Right lobe of liver (tissue), 6 donors: ENCODE measurements at regions of chr16 and their contacts with region 1.

Region 1: GRCh38 chr16:63038397-63039106 is 1002.3 kb upstream of the CDH8 start:
- DNase-seq: no peak
- ATAC-seq: no peak
- H3K4me3 ChIP-seq: no peak overlapping the region
- H3K27ac ChIP-seq: no peak overlapping the region
- H3K4me1 ChIP-seq: no peaks in the 10 kb centered on the region
- H3K27me3 ChIP-seq: no peaks in the 10 kb centered on the region
- CTCF ChIP-seq: no peak
- POLR2A ChIP-seq: no peak

Region 2: DNA sequence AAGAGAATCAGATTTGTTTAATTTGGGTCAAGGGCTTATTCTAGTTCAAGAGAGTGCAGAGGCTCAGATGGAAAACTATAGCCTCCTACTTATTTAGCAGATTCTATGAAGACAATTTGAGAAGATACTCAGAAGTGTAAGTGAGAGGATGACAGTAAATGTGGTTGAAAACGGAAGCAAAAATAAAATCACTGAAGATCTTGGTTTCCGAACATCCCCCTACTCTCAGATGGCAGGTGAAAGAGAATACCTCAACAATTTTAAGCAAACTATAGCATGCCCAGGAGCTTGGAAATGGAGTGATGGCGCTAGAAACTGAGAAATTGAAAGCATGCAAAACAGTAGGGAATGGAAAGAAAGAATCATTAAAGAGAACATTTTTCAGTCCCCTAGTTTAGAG is 296.9 kb before region 1 on chr16:
- intact Hi-C with region 1: loop called in 1 of 2 experiments (anchors 10 kb)
- DNase-seq: no peak
- ATAC-seq: no peak
- H3K4me3 ChIP-seq: no peak overlapping the region
- H3K27ac ChIP-seq: no peak overlapping the region
- H3K4me1 ChIP-seq: no peaks in the 10 kb centered on the region
- H3K27me3 ChIP-seq: no peaks in the 10 kb centered on the region
- CTCF ChIP-seq: no peak
- POLR2A ChIP-seq: no peak

Region 3: DNA sequence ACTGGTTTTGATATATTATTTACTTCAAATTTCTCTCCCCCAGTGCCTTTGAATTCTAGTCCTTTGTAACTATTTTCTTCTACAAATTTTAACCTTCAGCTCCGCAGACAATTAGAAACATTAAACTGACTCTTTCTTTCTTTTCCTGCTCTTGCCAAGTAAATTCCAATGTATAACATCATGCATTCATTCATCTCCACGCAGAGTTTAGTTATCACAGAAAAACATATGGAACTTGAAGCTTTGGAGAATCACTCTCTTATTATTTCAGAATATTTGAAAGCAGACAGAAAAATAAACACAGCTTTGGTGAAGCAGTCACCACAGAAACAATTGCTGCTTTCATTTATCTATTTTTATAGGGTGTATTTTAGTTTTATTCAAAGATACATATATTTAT is 223.7 kb before region 1 on chr16:
- intact Hi-C with region 1: no loop called
- DNase-seq: no peak
- ATAC-seq: no peak
- H3K4me3 ChIP-seq: no peak overlapping the region
- H3K27ac ChIP-seq: no peak overlapping the region
- H3K4me1 ChIP-seq: no peaks in the 10 kb centered on the region
- H3K27me3 ChIP-seq: no peaks in the 10 kb centered on the region
- CTCF ChIP-seq: no peak
- POLR2A ChIP-seq: no peak

Region 4: DNA sequence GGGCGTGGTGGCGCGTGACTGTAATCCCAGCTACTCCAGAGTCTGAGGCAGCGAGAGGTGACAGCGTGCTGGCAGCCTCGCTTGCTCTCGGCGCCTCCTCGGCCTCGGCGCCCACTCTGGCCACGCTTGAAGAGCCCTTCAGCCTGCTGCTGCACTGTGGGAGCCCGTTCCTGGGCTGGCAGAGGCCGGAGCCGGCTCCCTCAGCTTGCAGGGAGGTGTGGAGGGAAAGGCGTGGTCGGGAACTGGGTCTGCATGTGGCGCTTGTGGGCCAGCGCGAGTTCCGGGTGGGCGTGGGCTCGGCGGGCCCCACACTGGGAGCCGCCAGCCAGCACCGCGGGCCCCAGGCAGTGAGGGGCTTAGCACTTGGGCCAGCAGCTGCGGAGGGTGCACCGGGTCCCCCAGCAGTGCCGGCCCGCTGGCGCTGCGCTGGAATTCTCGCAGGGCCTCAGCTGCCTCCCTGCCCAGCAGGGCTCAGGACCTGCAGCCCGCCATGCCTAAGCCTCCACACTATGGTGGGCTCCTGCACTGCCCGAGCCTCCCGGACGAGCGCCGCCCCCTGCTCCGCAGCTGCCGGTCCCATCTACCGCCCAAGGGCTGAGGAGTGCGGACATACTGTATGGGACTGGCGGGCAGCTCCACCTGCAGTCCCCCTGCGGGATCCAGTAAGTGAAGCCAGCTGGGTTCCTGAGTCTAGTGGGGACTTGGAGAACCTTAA is 91.0 kb after region 1 on chr16:
- intact Hi-C with region 1: no loop called
- DNase-seq: no peak
- ATAC-seq: peak in 1 of 4 donors; percentile 38
- H3K4me3 ChIP-seq: no peak overlapping the region
- H3K27ac ChIP-seq: no peak overlapping the region
- H3K4me1 ChIP-seq: no peaks in the 10 kb centered on the region
- H3K27me3 ChIP-seq: no peaks in the 10 kb centered on the region
- CTCF ChIP-seq: no peak
- POLR2A ChIP-seq: no peak